ENCODE measurements at regions of chr18 and their contacts with region 1.

Region 1: DNA sequence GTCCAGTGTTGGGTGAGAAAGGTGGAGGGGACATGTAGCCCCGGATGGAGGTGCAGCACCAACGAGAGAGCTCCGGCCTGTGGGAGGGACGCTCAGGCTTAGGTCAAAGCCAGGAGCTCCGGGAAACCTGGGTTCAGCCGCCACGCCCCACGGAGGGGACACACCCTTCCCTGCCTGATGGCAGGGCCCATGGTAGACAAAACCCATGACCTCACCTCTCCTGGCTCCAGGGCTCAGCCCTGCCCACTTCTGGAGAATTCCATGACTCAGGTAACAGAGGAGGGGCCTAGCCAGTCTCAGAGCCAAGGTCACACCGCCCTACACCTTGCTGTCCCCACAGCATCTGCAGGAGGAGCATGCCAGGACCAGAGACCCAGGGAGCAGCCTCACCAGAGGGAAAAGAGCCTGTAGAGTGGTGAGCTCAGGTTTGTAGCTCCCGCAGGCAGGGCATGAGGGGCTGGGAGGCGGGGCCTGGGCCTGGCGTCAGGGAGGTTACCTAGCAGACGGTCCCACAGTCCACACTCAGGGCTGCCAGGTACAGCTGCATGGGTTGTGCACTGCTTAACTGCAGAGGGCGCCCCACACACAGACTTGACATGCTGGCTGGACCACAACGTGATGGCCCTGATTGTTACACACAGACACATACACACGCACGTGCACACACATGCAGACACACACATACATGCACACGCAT is 70.8 kb upstream of the SMAD7 start:
- DNase-seq: peak; percentile 38 to 70 (median 48)
- ATAC-seq: peak; percentile 94
- H3K4me3 ChIP-seq: no peak overlapping the region
- H3K27ac ChIP-seq: no peak overlapping the region
- H3K4me1 ChIP-seq: peaks cover 0 to 34% of the 10 kb centered on the region in 2 experiments; a peak in 3 of 5 replicates
- H3K27me3 ChIP-seq: no peaks in the 10 kb centered on the region
- CTCF ChIP-seq: peak; percentile 70 to 71 (median 70)
- EP300 ChIP-seq: no peak
- POLR2A ChIP-seq: no peak
- RAD21 ChIP-seq: peak; percentile 56 to 81

Region 2: GRCh38 chr18:48470484-48471180 is 550.9 kb before region 1 on chr18:
- CTCF ChIA-PET with region 1: no interaction called
- POLR2A ChIA-PET with region 1: no interaction called
- in situ Hi-C with region 1: no loop called
- intact Hi-C with region 1: no loop called
- DNase-seq: no peak
- ATAC-seq: no peak
- H3K4me3 ChIP-seq: no peak overlapping the region
- H3K27ac ChIP-seq: no peak overlapping the region
- H3K4me1 ChIP-seq: no peaks in the 10 kb centered on the region; a peak in 1 of 5 replicates
- H3K27me3 ChIP-seq: peaks cover 0 to 7% of the 10 kb centered on the region in 2 experiments; a peak in 2 of 5 replicates
- CTCF ChIP-seq: no peak
- EP300 ChIP-seq: no peak
- POLR2A ChIP-seq: no peak
- RAD21 ChIP-seq: no peak

Region 3: GRCh38 chr18:48834413-48835031 is 187.1 kb before region 1 on chr18:
- CTCF ChIA-PET with region 1: no interaction called
- POLR2A ChIA-PET with region 1: no interaction called
- in situ Hi-C with region 1: no loop called
- intact Hi-C with region 1: no loop called
- DNase-seq: peak in 1 of 4 experiments; percentile 32
- ATAC-seq: no peak
- H3K4me3 ChIP-seq: no peak overlapping the region
- H3K27ac ChIP-seq: no peak overlapping the region; the same call in 2 of the 3 replicates
- H3K4me1 ChIP-seq: peaks cover 14 to 28% of the 10 kb centered on the region in 2 experiments
- H3K27me3 ChIP-seq: no peaks in the 10 kb centered on the region
- CTCF ChIP-seq: no peak
- EP300 ChIP-seq: no peak
- POLR2A ChIP-seq: no peak
- RAD21 ChIP-seq: no peak

Region 4: GRCh38 chr18:49045585-49045984 is 24.0 kb after region 1 on chr18:
- CTCF ChIA-PET with region 1: no interaction called
- POLR2A ChIA-PET with region 1: no interaction called
- in situ Hi-C with region 1: no loop called
- intact Hi-C with region 1: no loop called
- DNase-seq: no peak
- ATAC-seq: no peak
- H3K4me3 ChIP-seq: no peak overlapping the region
- H3K27ac ChIP-seq: no peak overlapping the region
- H3K4me1 ChIP-seq: peaks cover 0 to 3% of the 10 kb centered on the region in 2 experiments; a peak in 2 of 5 replicates
- H3K27me3 ChIP-seq: no peaks in the 10 kb centered on the region
- CTCF ChIP-seq: no peak
- EP300 ChIP-seq: no peak
- POLR2A ChIP-seq: no peak
- RAD21 ChIP-seq: no peak

Region 5: GRCh38 chr18:49178736-49179135 is 157.2 kb after region 1 on chr18:
- CTCF ChIA-PET with region 1: no interaction called
- POLR2A ChIA-PET with region 1: no interaction called
- in situ Hi-C with region 1: no loop called
- intact Hi-C with region 1: loop called (anchors 2 kb)
- DNase-seq: peak; percentile 19 to 52 (median 26)
- ATAC-seq: peak; percentile 55; the same call in 1 of the 3 replicates
- H3K4me3 ChIP-seq: no peak overlapping the region
- H3K27ac ChIP-seq: no peak overlapping the region
- H3K4me1 ChIP-seq: no peaks in the 10 kb centered on the region
- H3K27me3 ChIP-seq: no peaks in the 10 kb centered on the region
- CTCF ChIP-seq: peak; percentile 52 to 61 (median 58); a peak in 5 of 6 replicates
- EP300 ChIP-seq: no peak
- POLR2A ChIP-seq: no peak
- RAD21 ChIP-seq: peak; percentile 60 to 76

Region 6: GRCh38 chr18:49238433-49239042 is 217.0 kb after region 1 on chr18:
- CTCF ChIA-PET with region 1: no interaction called
- POLR2A ChIA-PET with region 1: no interaction called
- in situ Hi-C with region 1: no loop called
- intact Hi-C with region 1: loop called (anchors 10 kb)
- DNase-seq: peak in 3 of 4 experiments; percentile 6 to 29 (median 9)
- ATAC-seq: no peak
- H3K4me3 ChIP-seq: no peak overlapping the region
- H3K27ac ChIP-seq: no peak overlapping the region
- H3K4me1 ChIP-seq: no peaks in the 10 kb centered on the region
- H3K27me3 ChIP-seq: no peaks in the 10 kb centered on the region
- CTCF ChIP-seq: peak in 2 of 3 experiments; percentile 33 to 60; a peak in 2 of 6 replicates
- EP300 ChIP-seq: no peak
- POLR2A ChIP-seq: no peak
- RAD21 ChIP-seq: peak in 1 of 2 experiments; percentile 68